Left cardiac atrium (tissue), 4 donors: ENCODE measurements at regions of chr2 and their contacts with region 1.

Region 1: GRCh38 chr2:74328074-74328473 is 15.1 kb downstream of the SLC4A5 start:
- DNase-seq: no peak
- ATAC-seq: no peak

Region 2: DNA sequence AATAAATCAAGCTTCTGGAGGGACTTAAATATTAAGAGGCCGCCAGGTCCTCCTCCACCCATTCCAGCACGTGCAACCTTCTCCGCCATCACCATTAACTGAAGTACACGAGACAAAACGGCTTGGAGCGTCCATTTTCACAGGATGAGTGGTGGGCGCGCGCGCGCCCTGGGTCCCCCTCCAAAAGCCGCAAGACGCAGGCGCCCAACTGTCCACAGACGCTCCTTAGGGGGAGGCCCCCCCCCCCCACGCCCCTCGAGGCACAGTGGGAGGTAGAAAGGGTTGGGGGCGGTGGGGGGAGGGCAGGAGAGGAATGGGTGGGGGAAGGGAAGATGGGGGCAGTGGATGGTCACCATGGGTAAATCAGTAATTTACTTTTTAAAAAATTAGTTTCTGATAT is 509.8 kb before region 1 on chr2:
- intact Hi-C with region 1: no loop called
- DNase-seq: no peak
- ATAC-seq: no peak

Region 3: DNA sequence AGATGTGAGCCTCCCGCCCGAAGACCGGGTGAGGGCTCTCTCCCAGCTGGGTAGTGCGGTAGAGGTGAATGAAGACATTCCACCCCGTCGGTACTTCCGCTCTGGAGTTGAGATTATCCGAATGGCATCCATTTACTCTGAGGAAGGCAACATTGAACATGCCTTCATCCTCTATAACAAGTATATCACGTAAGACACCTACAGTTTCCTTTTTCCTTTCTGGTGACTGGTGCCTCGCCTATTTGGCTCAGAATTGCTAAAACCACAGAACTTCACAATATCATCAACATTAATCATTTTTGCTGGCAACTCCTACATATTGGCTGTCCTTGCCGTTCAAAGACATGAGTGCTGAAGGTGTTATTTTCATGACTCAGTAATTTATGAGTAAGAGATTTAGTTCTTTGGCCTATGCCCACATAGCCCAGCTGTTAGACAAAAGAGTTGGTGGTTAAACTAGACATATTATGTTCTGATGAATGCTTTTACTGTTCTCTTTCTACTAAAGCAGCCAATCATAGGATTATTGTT is 497.1 kb before region 1 on chr2:
- intact Hi-C with region 1: loop called in 1 of 2 experiments (anchors 5 kb)
- DNase-seq: no peak
- ATAC-seq: peak in 1 of 2 donors; percentile 65